GM12878 (cell line): ENCODE measurements at regions of chr3 and their contacts with region 1.

Region 1: GRCh38 chr3:158165730-158166129 is 55.8 kb downstream of the RSRC1 start:
- DNase-seq: no peak
- ATAC-seq: no peak
- H3K4me3 ChIP-seq: no peak overlapping the region
- H3K27ac ChIP-seq: no peak overlapping the region
- H3K4me1 ChIP-seq: no peaks in the 10 kb centered on the region
- H3K27me3 ChIP-seq: no peaks in the 10 kb centered on the region
- CTCF ChIP-seq: no peak
- EP300 ChIP-seq: no peak
- POLR2A ChIP-seq: no peak
- RAD21 ChIP-seq: no peak

Region 2: GRCh38 chr3:158152186-158152585 is 13.5 kb before region 1 on chr3:
- CTCF ChIA-PET with region 1: interaction called, 4 read pairs
- POLR2A ChIA-PET with region 1: no interaction called
- RAD21 ChIA-PET with region 1: no interaction called
- SMC1A ChIA-PET with region 1: interaction called, 17 read pairs
- in situ Hi-C with region 1: no loop called
- intact Hi-C with region 1: no loop called
- DNase-seq: no peak
- ATAC-seq: peak; percentile 68
- H3K4me3 ChIP-seq: no peak overlapping the region
- H3K27ac ChIP-seq: no peak overlapping the region
- H3K4me1 ChIP-seq: no peaks in the 10 kb centered on the region
- H3K27me3 ChIP-seq: no peaks in the 10 kb centered on the region
- CTCF ChIP-seq: no peak
- EP300 ChIP-seq: no peak
- POLR2A ChIP-seq: no peak
- RAD21 ChIP-seq: no peak